ENCODE measurements at regions of chrX and their contacts with region 1.

Region 1: GRCh38 chrX:44244008-44244407 is 99.5 kb downstream of the EFHC2 start:
- DNase-seq: no peak
- H3K4me3 ChIP-seq: no peak overlapping the region
- H3K27ac ChIP-seq: no peak overlapping the region
- H3K4me1 ChIP-seq: no peaks in the 10 kb centered on the region
- H3K27me3 ChIP-seq: no peaks in the 10 kb centered on the region
- CTCF ChIP-seq: peak; percentile 49

Region 2: GRCh38 chrX:43958529-43958928 is 285.5 kb before region 1 on chrX:
- intact Hi-C with region 1: loop called (anchors 5 kb)
- DNase-seq: peak; percentile 42
- H3K4me3 ChIP-seq: no peak overlapping the region
- H3K27ac ChIP-seq: no peak overlapping the region
- H3K4me1 ChIP-seq: no peaks in the 10 kb centered on the region
- H3K27me3 ChIP-seq: no peaks in the 10 kb centered on the region
- CTCF ChIP-seq: peak; percentile 63

Measured in colonic mucosa (tissue), 4 donors.